GM18951 (cell line): ENCODE measurements at regions of chr10 and their contacts with region 1.

Region 1: DNA sequence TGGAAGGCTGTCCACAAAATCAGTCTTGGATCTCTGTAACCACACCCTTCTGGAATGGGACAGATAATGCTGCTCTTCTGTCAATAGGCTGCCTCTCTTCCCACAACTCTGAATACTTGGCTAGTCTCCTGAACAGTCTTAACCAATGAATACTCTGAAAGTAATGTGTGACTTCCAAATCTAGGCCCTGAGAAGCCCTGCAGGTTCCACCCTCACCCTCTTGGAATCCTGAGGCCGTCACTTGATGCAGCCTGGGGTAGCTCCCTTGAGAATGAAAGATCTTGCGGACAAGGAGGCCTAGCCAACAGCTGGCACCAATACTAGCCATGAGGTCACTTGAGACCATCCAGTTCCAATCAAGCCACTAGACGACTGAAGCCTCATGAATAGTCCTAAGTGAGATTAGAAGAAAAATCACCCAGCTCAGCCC is 109.2 kb downstream of the ARHGAP12 start:
- POLR2A ChIP-seq: no peak

Region 2: GRCh38 chr10:30736685-30737232 is 1082.6 kb before region 1 on chr10:
- in situ Hi-C with region 1: loop called (anchors 10 kb)
- POLR2A ChIP-seq: no peak

Region 3: DNA sequence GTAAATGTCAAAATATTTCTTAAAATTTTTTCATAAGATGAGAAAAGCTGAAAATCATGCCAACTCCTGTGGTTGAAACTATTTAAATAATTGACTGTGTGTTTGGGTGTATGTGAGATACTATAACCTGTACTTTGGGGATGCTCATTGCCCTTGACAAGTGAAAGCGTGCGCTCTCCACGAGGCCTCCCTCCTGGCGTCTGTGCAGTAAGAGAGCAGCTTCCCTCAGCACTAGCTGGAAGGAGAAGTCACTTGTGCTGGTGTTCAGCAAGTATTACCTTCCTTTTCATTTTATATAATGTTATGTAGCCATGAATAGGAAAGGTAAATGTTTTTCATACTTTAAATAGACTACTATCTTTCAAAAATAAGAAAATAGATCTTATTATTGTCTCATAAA is 381.4 kb before region 1 on chr10:
- in situ Hi-C with region 1: no loop called
- POLR2A ChIP-seq: no peak

Region 4: DNA sequence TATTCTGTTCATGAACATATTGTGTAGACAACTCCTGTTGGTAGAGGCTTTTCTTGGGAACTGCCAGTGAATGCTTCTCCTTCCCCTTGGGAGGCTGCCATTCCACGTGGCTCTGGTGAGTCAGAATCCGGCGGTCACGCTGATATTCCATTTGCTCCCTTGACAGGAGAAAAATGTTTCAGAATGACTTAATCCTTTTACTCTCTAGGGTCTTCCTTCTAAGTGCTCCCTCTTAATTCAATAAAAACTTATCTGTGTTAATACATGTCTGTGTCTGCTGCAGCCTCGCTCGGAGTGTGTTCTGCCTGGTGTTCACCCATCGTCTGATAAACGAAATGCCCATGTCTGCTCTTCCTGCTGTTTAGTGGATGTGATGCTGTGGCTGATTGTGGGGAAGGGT is 169.4 kb before region 1 on chr10:
- in situ Hi-C with region 1: no loop called
- POLR2A ChIP-seq: no peak